Aorta (tissue), 5 donors: ENCODE measurements at regions of chr14 and their contacts with region 1.

Region 1: DNA sequence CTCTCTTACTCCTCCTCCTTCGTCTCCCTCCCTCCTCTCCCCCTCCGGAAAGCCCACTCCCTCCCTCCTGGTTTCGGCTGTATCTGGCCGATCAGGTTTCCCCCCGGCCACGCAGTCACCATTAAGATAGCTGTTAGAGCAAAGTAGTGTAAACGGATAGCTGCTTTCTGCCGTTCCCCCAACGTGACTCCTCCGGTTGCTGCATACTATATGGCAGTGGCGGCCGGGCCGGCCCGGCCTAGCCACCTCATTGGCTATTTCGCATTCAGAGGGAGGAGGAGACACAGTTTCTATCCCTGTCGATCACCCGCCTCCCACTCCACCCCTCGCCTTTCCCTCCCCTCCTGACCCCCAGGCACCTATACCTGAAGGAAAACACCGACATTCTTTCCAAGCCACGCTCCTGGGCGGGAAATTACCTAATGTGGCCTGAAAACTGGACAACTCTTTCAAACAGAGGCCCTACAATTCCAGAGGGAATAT is at the start of gene SIX4:
- DNase-seq: peak; percentile 73 to 89
- ATAC-seq: peak; percentile 81
- H3K4me3 ChIP-seq: peak within 1 kb of the TSS; percentile 19 to 74
- H3K27ac ChIP-seq: no peak within 1 kb of the TSS
- H3K4me1 ChIP-seq: no peaks in the 10 kb centered on the region
- H3K27me3 ChIP-seq: no peaks in the 10 kb centered on the region
- total RNA-seq, gene SIX4: 3.0 to 6.0 TPM

Region 2: GRCh38 chr14:60656686-60657455 is 67.3 kb before region 1 on chr14:
- intact Hi-C with region 1: loop called in 1 of 2 experiments (anchors 5 kb)
- DNase-seq: peak; percentile 69 to 86
- ATAC-seq: peak; percentile 86
- H3K4me3 ChIP-seq: peak overlapping the region; percentile 35 to 61
- H3K27ac ChIP-seq: no peak overlapping the region
- H3K4me1 ChIP-seq: no peaks in the 10 kb centered on the region
- H3K27me3 ChIP-seq: no peaks in the 10 kb centered on the region

Region 3: DNA sequence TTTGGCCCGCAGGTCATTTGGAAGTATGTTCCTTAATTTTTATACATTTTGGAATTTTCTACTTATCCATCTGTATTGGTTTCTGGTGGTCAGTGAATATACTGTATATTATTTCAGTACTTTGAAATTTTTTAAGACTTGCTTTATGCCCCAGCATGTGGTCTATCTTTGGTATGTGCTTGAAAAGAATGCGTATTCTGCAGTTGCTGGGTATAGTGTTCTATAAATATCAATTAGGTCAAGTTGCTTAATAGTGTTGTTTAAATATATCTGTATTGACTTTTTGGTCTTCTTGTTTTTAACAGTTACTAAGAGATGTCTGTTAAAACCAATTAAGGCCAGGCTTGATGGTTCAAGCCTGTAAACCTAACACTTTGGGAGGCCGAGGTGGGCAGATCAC is 53.2 kb before region 1 on chr14:
- intact Hi-C with region 1: no loop called
- DNase-seq: no peak
- ATAC-seq: no peak
- H3K4me3 ChIP-seq: no peak overlapping the region
- H3K27ac ChIP-seq: no peak overlapping the region
- H3K4me1 ChIP-seq: no peaks in the 10 kb centered on the region
- H3K27me3 ChIP-seq: no peaks in the 10 kb centered on the region

Region 4: GRCh38 chr14:60980811-60981632 is 256.8 kb after region 1 on chr14 and contains the starts of genes SLC38A6 and TRMT5:
- intact Hi-C with region 1: loop called (anchors 10 kb)
- DNase-seq: peak; percentile 95 to 98
- ATAC-seq: peak; percentile 97
- H3K4me3 ChIP-seq: peak within 1 kb of the TSS; percentile 70 to 75
- H3K27ac ChIP-seq: peak within 1 kb of the TSS in 1 of 2 donors; percentile 72
- H3K4me1 ChIP-seq: peaks cover 1 to 5% of the 10 kb centered on the region in 2 donors
- H3K27me3 ChIP-seq: no peaks in the 10 kb centered on the region
- total RNA-seq, gene SLC38A6: 17.2 to 41.3 TPM
- total RNA-seq, gene TRMT5: 8.8 to 12.3 TPM

Region 5: DNA sequence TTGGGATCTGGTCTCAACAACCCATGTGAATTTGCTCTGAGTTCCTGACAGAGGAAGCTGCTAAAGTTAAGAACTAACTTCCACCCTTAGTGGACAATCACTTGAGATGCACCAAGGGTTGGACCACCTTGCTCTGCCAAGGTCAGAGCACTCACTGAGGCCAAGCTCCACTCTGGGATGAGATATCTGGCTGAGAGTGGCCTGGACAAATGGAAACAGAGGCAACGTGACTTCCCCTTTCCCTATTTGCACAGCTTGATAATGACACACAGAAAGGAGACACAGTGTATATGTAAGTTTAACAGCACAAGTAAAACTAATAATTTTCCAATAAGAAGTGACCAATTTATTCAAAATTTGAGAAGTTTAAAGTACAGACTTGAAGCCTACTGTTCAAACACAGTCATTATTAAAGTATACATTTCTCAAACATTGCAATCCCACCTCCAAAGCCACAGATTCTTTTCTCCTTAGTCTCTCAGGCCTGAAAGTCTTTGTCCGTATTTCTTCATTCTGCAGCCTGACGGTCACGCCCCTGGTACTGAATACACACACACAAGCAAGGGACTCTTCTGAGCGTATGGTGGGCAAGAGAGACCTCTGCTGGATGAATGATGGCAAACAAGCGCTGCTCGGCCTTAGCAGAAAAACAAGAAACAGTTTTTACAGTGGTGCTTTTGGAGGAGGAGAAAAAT is 528.3 kb after region 1 on chr14:
- intact Hi-C with region 1: loop called in 1 of 2 experiments (anchors 10 kb)
- DNase-seq: peak in 1 of 2 donors; percentile 83
- ATAC-seq: peak; percentile 94
- H3K4me3 ChIP-seq: no peak overlapping the region
- H3K27ac ChIP-seq: no peak overlapping the region
- H3K4me1 ChIP-seq: no peaks in the 10 kb centered on the region
- H3K27me3 ChIP-seq: no peaks in the 10 kb centered on the region

Region 6: GRCh38 chr14:61308198-61308597 is 584.0 kb after region 1 on chr14:
- intact Hi-C with region 1: no loop called
- DNase-seq: no peak
- ATAC-seq: no peak
- H3K4me3 ChIP-seq: no peak overlapping the region
- H3K27ac ChIP-seq: no peak overlapping the region
- H3K4me1 ChIP-seq: no peaks in the 10 kb centered on the region
- H3K27me3 ChIP-seq: peaks cover 0 to 2% of the 10 kb centered on the region in 2 donors